OCI-LY7 (cell line): ENCODE measurements at regions of chr7 and their contacts with region 1.

Region 1: DNA sequence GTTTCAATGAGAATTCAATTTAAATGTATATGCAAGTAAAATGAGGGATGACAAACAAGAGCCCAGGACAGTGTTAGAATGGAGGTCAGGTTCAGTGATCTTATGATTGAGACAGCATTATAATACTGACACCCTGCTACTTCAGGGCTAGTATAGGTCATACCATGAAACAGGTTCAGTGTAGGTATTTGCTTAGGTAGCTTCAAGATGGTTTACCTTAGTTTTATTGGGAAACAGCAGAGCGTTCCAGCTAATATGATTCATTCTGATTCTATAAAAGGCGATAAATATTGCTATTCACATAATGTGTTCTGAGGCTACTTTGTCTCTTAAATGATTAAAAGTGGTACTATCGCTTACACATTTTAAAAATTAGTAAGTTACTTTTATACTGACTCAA is 203.3 kb downstream of the PPP1R9A start:
- DNase-seq: no peak
- H3K4me3 ChIP-seq: no peak overlapping the region
- H3K27ac ChIP-seq: no peak overlapping the region
- H3K4me1 ChIP-seq: no peaks in the 10 kb centered on the region
- CTCF ChIP-seq: no peak

Region 2: DNA sequence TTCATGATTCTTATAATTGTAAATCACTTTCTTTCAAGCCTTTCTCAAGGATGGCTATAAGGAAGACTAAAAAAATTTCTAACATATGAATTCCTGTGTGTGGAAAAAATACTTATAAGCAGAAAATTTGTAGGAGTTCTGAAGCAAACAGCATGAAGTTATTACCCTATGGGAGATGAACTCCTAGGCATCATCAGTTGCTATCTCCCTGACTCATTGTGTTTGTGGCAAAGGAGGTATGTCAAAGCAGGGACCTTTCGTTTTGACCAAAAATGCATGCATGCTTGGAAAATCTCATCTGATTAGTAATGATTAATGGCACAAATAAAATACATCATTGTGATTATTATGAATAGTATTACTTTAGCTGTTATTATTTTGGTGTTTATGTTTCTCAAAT is 1595.6 kb before region 1 on chr7:
- CTCF ChIA-PET with region 1: no interaction called
- POLR2A ChIA-PET with region 1: no interaction called
- intact Hi-C with region 1: loop called (anchors 5 kb)
- DNase-seq: no peak
- H3K4me3 ChIP-seq: no peak overlapping the region
- H3K27ac ChIP-seq: no peak overlapping the region
- H3K4me1 ChIP-seq: no peaks in the 10 kb centered on the region
- CTCF ChIP-seq: no peak

Region 3: DNA sequence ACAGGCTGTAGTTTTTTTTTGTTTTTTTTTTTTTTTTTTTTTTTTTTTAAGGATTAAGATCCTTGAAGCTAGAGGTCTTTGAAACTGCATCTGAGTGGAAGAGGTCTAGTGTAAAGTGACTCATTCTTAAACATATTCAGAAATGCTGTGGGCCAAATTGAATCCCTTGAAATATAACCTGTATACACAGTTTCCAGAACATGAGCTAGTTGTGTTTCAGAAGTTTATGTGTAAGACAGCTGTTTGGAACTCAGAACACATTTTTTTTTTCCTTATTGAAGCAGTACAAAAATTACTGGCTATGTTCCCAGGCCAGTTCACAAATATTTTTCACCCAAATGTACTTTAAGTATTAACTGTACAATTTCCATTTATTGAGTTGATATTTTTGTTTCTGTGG is 135.4 kb before region 1 on chr7:
- CTCF ChIA-PET with region 1: no interaction called
- POLR2A ChIA-PET with region 1: no interaction called
- intact Hi-C with region 1: no loop called
- DNase-seq: no peak
- H3K4me3 ChIP-seq: no peak overlapping the region
- H3K27ac ChIP-seq: no peak overlapping the region
- H3K4me1 ChIP-seq: no peaks in the 10 kb centered on the region
- CTCF ChIP-seq: no peak

Region 4: GRCh38 chr7:95095966-95096540 is 14.7 kb before region 1 on chr7:
- CTCF ChIA-PET with region 1: no interaction called
- POLR2A ChIA-PET with region 1: no interaction called
- intact Hi-C with region 1: no loop called
- DNase-seq: no peak
- H3K4me3 ChIP-seq: no peak overlapping the region
- H3K27ac ChIP-seq: no peak overlapping the region
- H3K4me1 ChIP-seq: no peaks in the 10 kb centered on the region
- CTCF ChIP-seq: no peak

Region 5: GRCh38 chr7:95545078-95545498 is 434.4 kb after region 1 on chr7:
- CTCF ChIA-PET with region 1: no interaction called
- POLR2A ChIA-PET with region 1: no interaction called
- intact Hi-C with region 1: no loop called
- DNase-seq: no peak
- H3K4me3 ChIP-seq: no peak overlapping the region
- H3K27ac ChIP-seq: no peak overlapping the region
- H3K4me1 ChIP-seq: no peaks in the 10 kb centered on the region
- CTCF ChIP-seq: peak; percentile 23; the same call in 1 of the 2 replicates